ENCODE measurements at regions of chr2 and their contacts with region 1.

Region 1: DNA sequence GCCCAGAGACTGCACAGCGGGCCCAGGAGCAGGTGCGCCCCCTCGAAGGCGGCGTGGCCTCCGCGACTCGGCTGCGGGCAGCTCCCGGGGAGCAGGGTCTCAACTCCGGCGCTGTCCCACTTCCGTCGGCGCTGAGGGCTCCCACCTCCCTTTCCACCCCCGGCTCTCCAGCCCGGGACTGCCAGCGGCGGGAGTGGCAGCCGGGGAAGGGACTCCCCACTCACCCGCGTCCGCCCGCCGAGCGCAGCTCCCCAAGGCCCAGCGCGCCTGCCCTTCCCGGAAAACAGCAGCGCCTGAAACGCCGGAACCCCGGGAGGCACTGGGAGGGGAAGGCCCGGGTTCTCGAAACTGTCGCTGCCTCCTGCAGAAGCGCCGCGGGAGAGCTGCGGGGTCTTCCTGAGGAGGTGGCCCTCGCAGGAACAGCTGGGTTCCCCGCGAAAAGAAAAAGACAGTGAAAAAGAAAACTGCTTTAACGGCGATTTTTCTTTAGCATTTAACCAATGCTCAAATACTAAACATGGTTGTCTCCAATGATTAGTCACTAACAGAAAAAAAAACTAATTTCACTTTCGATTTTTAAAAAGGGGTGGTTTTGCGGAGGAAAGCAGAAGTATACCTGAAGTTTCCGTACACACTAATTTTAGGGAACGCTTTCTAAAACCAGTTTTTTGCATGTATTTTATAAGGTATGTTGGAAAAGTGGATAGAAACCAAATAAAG is at the start of gene NMI:
- DNase-seq: peak; percentile 76 to 83 (median 78)
- H3K4me3 ChIP-seq: peak within 1 kb of the TSS; percentile 69
- H3K27ac ChIP-seq: peak within 1 kb of the TSS; percentile 98 to 99
- H3K4me1 ChIP-seq: peaks cover 1% of the 10 kb centered on the region
- H3K27me3 ChIP-seq: no peaks in the 10 kb centered on the region
- CTCF ChIP-seq: no peak
- EP300 ChIP-seq: peak; percentile 1
- POLR2A ChIP-seq: no peak
- total RNA-seq, gene NMI: 8.4 to 17.3 (median 13.7) TPM

Region 2: DNA sequence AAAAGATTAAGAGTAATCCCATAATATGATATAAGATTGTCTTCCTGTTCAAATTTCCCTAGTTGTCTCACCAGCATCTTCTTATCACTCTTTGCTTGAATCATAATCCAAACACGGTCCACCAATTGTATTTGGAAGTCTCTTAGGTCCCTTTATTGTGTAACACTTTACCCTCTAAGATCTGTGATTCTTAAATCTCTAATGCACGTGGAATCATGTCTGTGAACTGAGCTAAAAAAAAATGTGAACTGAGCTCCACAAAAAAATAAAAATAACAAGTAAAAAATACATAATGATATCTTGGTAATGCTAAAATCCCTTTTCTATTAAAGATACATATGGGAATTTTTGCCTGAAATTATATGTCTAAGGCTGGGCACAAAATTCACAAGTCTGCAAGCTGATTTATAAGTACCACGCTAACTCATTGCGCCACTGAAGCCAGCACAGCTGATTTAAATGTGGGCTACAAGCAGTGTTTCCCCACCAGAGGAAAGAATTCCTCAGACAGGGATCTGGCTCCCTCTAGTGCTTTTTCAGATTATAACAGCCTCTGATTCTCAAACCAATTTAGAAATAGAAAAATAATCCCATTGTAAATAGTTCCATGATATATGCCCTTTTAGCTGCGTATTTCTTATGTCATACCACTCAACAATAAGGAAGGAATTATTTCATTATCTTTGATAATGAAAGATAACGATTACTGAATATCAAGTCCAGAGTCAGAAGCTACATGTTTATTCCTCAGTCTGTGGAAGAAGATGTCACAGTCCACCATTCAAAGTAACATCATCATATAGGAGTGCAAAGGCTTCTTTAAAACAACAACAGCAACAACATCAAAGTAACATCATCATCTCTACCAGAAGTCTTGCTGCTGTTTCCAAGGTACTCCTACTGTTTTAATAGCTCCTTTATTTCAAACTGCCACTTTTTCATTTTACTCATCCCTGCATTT is 50.7 kb before region 1 on chr2:
- intact Hi-C with region 1: no loop called
- DNase-seq: peak; percentile 26 to 67 (median 45)
- H3K4me3 ChIP-seq: no peak overlapping the region
- H3K27ac ChIP-seq: no peak overlapping the region
- H3K4me1 ChIP-seq: no peaks in the 10 kb centered on the region
- H3K27me3 ChIP-seq: no peaks in the 10 kb centered on the region
- CTCF ChIP-seq: peak; percentile 54 to 79 (median 74)
- EP300 ChIP-seq: no peak
- POLR2A ChIP-seq: no peak

Region 3: GRCh38 chr2:151315381-151315903 is 25.9 kb after region 1 on chr2:
- intact Hi-C with region 1: loop called in 1 of 4 experiments (anchors 1 kb)
- DNase-seq: peak; percentile 56 to 71 (median 60)
- H3K4me3 ChIP-seq: no peak overlapping the region
- H3K27ac ChIP-seq: peak overlapping the region; percentile 14 to 47
- H3K4me1 ChIP-seq: peaks cover 5% of the 10 kb centered on the region
- H3K27me3 ChIP-seq: no peaks in the 10 kb centered on the region
- CTCF ChIP-seq: no peak
- EP300 ChIP-seq: no peak
- POLR2A ChIP-seq: no peak

Region 4: GRCh38 chr2:151409601-151410484 is 120.3 kb after region 1 on chr2 and contains the start of gene RIF1:
- intact Hi-C with region 1: loop called in 1 of 4 experiments (anchors 10 kb)
- DNase-seq: peak; percentile 83 to 89 (median 87)
- H3K4me3 ChIP-seq: peak within 1 kb of the TSS; percentile 99
- H3K27ac ChIP-seq: peak within 1 kb of the TSS; percentile 95
- H3K4me1 ChIP-seq: peaks cover 1% of the 10 kb centered on the region
- H3K27me3 ChIP-seq: no peaks in the 10 kb centered on the region
- CTCF ChIP-seq: peak; percentile 62 to 86 (median 74)
- EP300 ChIP-seq: no peak
- POLR2A ChIP-seq: peak; percentile 56
- total RNA-seq, gene RIF1: 35.5 to 56.1 (median 49.5) TPM

Region 5: GRCh38 chr2:151437630-151438029 is 148.1 kb after region 1 on chr2:
- intact Hi-C with region 1: loop called in 1 of 4 experiments (anchors 10 kb)
- DNase-seq: no peak
- H3K4me3 ChIP-seq: no peak overlapping the region
- H3K27ac ChIP-seq: no peak overlapping the region
- H3K4me1 ChIP-seq: no peaks in the 10 kb centered on the region
- H3K27me3 ChIP-seq: no peaks in the 10 kb centered on the region
- CTCF ChIP-seq: peak; percentile 21 to 43 (median 23)
- EP300 ChIP-seq: no peak
- POLR2A ChIP-seq: no peak